ENCODE measurements at regions of chr16 and their contacts with region 1.

Region 1: GRCh38 chr16:84754353-84754856 is 54.6 kb downstream of the USP10 start:
- DNase-seq: peak; percentile 74
- CTCF ChIP-seq: peak; percentile 65

Region 2: DNA sequence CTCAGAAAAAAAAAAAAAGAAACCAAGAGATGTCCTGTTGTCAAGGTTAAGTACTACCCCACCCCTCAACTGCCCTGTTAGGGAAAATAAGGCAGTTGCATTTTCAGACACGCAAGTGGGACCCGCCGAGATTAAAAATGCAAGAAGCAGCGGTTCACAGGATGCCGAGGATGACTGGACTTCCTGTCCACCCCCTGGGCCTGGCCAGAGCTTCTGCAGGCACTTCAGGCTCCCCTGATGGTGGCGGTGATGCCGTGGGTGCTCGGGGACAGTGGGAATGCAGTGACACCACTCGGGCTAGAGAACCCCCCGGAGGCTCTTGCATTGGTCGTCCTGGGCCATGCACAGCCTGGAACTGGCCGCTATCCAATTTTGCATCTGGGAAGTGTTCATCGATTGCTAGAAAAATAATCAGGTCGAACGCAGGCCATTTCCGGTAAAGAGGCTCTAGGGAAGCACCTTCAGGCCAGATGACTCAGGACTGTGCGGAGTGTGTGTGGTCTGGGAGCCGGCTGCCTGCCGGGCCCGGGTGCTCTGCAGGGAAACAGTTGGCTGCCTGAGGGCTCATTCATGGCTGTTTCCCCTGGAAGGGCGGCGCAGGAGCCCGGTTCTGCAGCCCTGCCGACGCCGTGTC is 52.0 kb after region 1 on chr16:
- in situ Hi-C with region 1: no loop called
- DNase-seq: peak; percentile 72
- CTCF ChIP-seq: no peak

Region 3: GRCh38 chr16:84967828-84968227 is 213.4 kb after region 1 on chr16:
- in situ Hi-C with region 1: loop called (anchors 10 kb)
- DNase-seq: no peak
- CTCF ChIP-seq: no peak

Region 4: GRCh38 chr16:85002608-85003007 is 248.2 kb after region 1 on chr16:
- in situ Hi-C with region 1: no loop called
- DNase-seq: no peak
- CTCF ChIP-seq: no peak

Measured in GM13976 (cell line).